ENCODE measurements at regions of chr20 and their contacts with region 1.

Region 1: DNA sequence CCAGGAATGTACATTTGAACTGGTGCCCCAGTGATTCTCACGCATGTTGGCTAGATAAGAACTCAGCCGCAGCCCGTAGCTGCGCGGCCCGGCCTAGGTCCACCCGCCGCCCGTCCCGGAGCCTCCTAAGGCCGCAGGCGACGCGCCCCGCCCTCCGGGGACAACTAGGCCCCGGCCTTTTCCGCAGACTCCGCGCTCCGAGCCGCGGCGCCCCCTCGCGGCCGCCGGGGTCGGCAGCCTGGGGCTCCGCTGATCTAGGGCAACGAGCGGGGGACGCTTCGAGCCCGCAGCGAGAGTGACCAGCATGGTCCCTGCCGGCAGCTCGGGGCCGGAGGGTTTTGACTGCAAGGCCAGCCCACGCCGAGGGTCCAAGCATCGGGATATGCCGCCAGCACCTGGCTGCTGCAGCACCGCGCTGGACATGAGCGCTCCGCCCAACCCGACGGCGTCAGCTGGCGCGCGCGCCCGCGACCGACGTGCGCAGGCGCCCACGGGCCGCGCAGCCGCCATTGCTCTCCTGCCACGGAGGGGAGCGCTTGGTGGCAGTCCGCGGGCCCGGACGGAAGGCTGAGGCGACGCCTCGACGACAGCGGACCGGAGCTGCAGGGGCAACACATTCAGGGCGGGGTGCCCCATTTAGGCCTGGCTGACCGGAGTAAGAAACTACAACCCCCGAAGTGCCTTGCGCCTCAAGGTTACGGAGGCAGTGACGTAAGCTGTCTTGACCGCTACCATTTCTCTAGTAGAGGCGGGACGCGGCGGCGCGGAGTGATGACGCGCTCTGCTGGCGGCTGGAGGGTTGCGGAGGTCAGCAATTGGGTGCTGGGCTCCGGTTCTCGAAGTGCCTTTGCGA is at the start of gene AP5S1:
- DNase-seq: peak; percentile 92
- CTCF ChIP-seq: peak; percentile 96

Region 2: DNA sequence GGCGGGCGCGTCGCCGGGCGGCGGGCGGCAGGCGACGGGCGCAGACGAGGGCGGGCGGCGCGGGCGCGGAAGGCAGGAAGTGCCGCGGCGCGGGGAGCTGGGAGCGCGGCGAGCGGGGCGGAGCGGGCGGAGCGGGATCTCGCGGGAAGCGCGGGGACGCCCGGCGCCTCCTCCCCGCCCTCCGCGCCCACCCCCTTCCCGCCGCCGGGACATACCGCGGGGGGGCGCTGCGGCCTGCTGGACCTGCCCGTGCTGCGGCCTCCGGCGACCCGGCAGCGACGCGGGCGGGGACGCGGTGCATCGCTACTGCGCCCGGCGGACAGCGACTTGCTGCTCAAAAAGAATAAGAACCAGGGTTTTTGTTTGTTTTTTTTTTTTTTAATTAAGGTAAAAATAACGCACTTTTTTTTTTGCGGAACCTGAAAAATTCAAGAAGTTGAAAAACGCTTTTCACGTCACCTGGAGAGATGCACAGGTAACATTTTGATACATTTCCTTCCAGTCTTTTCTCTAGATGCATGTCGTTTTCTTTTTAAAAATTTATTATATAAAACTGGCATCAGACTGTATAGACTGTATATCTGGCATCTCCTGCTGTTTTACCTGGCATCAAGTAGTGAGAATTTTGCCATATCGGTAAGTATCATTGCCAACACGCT is 33.5 kb before region 1 on chr20 and contains the start of gene CENPB:
- CTCF ChIA-PET with region 1: interaction called, 63 read pairs
- POLR2A ChIA-PET with region 1: interaction called, 7 read pairs
- DNase-seq: peak; percentile 95
- CTCF ChIP-seq: peak; percentile 71

Region 3: DNA sequence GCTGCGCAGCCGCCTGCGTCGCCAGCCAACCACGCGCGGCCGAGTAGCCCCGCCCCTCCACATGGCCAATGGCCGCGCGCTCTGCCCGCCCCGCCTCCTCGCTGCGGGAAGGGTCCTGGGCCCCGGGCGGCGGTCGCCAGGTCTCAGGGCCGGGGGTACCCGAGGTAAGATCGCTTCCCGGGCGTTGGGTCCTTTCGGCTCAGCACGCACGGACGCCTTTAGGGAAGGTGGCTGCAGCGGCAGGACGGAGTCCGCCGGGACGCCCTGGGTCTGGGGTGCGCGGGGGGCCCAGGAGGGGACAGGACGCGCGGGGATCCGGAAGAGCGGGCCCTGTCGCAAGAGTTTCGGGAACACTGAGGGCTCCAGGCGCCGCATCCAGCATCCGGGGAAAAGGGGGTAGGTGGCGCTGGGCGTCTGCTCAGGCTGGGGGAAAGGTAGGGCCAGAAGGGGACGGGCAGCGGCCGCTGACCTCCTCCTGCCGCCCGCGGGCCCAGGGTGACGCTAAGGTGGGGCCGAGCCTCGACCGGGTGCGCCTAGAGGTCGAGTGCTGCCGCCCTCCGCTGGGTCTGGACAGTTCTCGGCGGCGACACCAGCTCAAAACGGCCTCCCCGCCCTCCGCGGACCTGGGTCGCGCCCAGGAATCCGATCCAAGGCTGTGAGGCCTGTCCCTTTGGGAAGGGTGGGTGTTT is 26.6 kb after region 1 on chr20 and contains the start of gene MAVS:
- CTCF ChIA-PET with region 1: interaction called, 11 read pairs
- POLR2A ChIA-PET with region 1: interaction called, 7 read pairs
- DNase-seq: peak; percentile 95
- CTCF ChIP-seq: peak; percentile 21

Region 4: GRCh38 chr20:3888622-3889488 is 68.6 kb after region 1 on chr20 and contains the start of gene PANK2:
- CTCF ChIA-PET with region 1: interaction called, 14 read pairs
- POLR2A ChIA-PET with region 1: no interaction called
- DNase-seq: peak; percentile 99
- CTCF ChIP-seq: peak; percentile 34

Region 5: GRCh38 chr20:4053071-4053919 is 233.0 kb after region 1 on chr20:
- CTCF ChIA-PET with region 1: no interaction called
- POLR2A ChIA-PET with region 1: no interaction called
- DNase-seq: no peak
- CTCF ChIP-seq: no peak

Measured in GM10248 (cell line).